BJ (cell line): ENCODE measurements at regions of chr2 and their contacts with region 1.

Region 1: GRCh38 chr2:9555297-9556141 is at the start of gene ADAM17:
- DNase-seq: peak; percentile 83
- H3K4me3 ChIP-seq: peak within 1 kb of the TSS; percentile 79
- H3K27me3 ChIP-seq: no peaks in the 10 kb centered on the region
- CTCF ChIP-seq: peak; percentile 64
- polyA plus RNA-seq, gene ADAM17: 8.7 and 11.1 TPM in 2 replicates

Region 2: GRCh38 chr2:9451231-9451630 is 104.3 kb before region 1 on chr2:
- CTCF ChIA-PET with region 1: no interaction called
- POLR2A ChIA-PET with region 1: no interaction called
- DNase-seq: no peak
- H3K4me3 ChIP-seq: no peak overlapping the region
- H3K27me3 ChIP-seq: no peaks in the 10 kb centered on the region
- CTCF ChIP-seq: no peak

Region 3: GRCh38 chr2:9543557-9543956 is 12.0 kb before region 1 on chr2:
- CTCF ChIA-PET with region 1: interaction called, 10 read pairs
- POLR2A ChIA-PET with region 1: interaction called, 8 read pairs
- DNase-seq: no peak
- H3K4me3 ChIP-seq: no peak overlapping the region
- H3K27me3 ChIP-seq: no peaks in the 10 kb centered on the region
- CTCF ChIP-seq: no peak

Region 4: GRCh38 chr2:9573840-9574239 is 18.3 kb after region 1 on chr2:
- CTCF ChIA-PET with region 1: no interaction called
- POLR2A ChIA-PET with region 1: no interaction called
- DNase-seq: no peak
- H3K4me3 ChIP-seq: no peak overlapping the region
- H3K27me3 ChIP-seq: no peaks in the 10 kb centered on the region
- CTCF ChIP-seq: no peak

Region 5: DNA sequence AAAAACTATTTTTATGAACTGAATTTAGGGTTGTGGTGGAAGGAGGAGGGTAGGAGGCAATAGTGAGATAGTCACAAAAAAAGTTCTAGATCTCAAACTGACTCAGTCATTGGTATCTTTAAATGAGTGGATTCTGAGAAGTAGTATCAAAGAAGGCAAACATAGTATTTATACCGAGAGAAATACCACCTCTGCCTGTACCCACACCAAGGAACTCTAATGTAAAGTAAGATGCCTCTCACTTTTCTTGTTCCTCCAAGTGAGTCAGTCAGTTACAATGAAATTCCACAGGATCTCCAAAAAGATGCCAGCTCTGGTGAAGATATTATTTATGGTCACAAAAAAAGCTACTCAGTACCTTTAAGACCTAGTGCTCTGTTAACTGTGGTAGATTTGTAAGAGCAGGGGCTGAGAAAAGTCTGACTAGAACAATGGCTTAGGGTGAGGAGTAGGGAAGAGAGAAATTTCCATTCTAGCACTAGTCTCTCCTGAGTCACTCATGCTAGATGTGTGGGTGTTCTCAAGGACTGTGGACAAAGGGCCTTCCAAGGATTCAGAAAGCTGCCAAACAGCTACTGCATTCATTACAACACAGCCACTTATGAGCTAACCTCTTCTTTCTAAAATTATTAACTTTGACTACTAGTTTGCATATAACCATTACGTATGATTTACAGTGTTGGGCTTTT is 39.0 kb after region 1 on chr2:
- CTCF ChIA-PET with region 1: no interaction called
- POLR2A ChIA-PET with region 1: interaction called, 20 read pairs
- DNase-seq: peak; percentile 43
- H3K4me3 ChIP-seq: no peak overlapping the region
- H3K27me3 ChIP-seq: no peaks in the 10 kb centered on the region
- CTCF ChIP-seq: no peak